ENCODE measurements at regions of chrX and their contacts with region 1.

Region 1: GRCh38 chrX:41695426-41695825 is 6.7 kb downstream of the GPR34 start:
- DNase-seq: no peak
- H3K4me3 ChIP-seq: no peak overlapping the region
- H3K27ac ChIP-seq: peak overlapping the region in 1 of 2 donors; percentile 41
- H3K4me1 ChIP-seq: peaks cover 0 to 3% of the 10 kb centered on the region in 2 donors
- H3K27me3 ChIP-seq: no peaks in the 10 kb centered on the region
- CTCF ChIP-seq: no peak

Region 2: DNA sequence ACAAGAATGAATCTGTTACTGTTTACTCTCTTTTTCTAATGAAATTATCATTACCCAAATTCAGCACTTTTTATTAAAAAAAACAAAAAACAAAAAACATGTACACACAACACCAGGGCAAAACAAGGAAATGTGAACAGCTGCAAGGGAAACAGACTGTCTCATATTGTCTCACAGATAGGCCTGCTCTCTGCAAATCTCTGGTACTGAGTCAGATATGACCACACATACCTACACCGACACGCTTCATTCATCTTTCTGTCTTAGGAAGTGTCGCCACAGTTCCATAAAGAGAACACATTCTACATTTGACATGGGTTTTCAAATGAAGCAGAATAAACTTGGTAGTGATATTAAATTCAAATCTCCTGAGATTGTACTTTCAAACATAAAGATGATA is 98.8 kb before region 1 on chrX:
- intact Hi-C with region 1: loop called (anchors 10 kb)
- DNase-seq: no peak
- H3K4me3 ChIP-seq: no peak overlapping the region
- H3K27ac ChIP-seq: no peak overlapping the region
- H3K4me1 ChIP-seq: no peaks in the 10 kb centered on the region
- H3K27me3 ChIP-seq: no peaks in the 10 kb centered on the region
- CTCF ChIP-seq: no peak

Region 3: DNA sequence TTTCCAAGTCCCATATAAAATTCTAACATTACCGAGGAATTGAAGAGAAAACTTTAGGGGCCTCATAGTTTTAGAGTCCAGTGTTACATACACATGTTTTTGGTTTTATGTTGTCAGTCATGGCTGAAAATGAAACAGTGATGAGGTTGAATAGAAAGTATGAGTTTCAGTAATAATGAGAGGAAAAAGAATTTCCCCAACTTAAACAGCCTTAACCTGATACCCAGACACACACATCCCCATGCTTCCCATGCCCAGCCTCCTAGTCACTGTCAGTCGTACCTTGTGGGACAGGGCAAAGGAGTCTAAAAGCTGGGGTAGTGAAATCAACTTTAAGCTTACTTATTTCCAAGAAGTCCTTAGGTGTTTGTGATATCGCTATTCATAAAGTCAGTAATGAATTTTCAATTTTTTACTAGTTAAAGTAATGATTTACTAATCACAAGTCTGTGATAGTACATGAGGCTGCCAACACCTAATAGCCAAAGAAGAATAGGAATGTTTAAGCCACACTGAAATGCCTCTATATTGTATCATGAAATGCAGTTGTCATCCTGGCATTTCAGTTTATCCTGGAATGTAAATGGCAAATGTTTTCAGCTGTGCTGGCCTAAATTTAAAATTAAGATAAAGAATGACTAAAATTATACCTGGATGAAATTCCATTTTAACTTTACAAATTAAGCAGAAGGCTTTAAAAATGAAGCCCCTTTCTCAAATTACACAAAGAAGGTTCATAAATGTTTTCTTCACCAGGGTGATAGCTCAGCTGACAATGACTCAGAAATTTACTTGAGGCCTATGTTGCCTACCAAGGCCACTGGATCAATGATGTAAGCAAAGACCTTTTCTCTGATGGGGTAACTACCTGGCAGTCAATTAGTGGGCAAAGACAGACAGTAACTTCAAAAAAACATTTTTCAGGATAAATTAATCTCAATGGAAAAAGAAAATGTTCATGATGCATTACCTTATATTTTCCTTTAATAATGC is 30.8 kb before region 1 on chrX:
- intact Hi-C with region 1: loop called (anchors 5 kb)
- DNase-seq: no peak
- H3K4me3 ChIP-seq: no peak overlapping the region
- H3K27ac ChIP-seq: peak overlapping the region; percentile 22 to 65
- H3K4me1 ChIP-seq: peaks cover 0 to 31% of the 10 kb centered on the region in 2 donors
- H3K27me3 ChIP-seq: no peaks in the 10 kb centered on the region
- CTCF ChIP-seq: no peak

Measured in ascending aorta (tissue), 2 donors.